Caco-2 (cell line): ENCODE measurements at regions of chr3 and their contacts with region 1.

Region 1: GRCh38 chr3:146283781-146284445 is 33.0 kb upstream of the PLSCR4 start:
- DNase-seq: peak; percentile 78 to 80
- H3K4me3 ChIP-seq: no peak overlapping the region
- H3K4me3 Mint-ChIP-seq: peak overlapping the region; percentile 66
- H3K27ac Mint-ChIP-seq: peak overlapping the region; percentile 95
- H3K4me1 ChIP-seq: peaks cover 40% of the 10 kb centered on the region
- H3K4me1 Mint-ChIP-seq: peaks cover 23% of the 10 kb centered on the region
- H3K27me3 ChIP-seq: no peaks in the 10 kb centered on the region
- H3K27me3 Mint-ChIP-seq: no peaks in the 10 kb centered on the region
- CTCF ChIP-seq: no peak

Region 2: DNA sequence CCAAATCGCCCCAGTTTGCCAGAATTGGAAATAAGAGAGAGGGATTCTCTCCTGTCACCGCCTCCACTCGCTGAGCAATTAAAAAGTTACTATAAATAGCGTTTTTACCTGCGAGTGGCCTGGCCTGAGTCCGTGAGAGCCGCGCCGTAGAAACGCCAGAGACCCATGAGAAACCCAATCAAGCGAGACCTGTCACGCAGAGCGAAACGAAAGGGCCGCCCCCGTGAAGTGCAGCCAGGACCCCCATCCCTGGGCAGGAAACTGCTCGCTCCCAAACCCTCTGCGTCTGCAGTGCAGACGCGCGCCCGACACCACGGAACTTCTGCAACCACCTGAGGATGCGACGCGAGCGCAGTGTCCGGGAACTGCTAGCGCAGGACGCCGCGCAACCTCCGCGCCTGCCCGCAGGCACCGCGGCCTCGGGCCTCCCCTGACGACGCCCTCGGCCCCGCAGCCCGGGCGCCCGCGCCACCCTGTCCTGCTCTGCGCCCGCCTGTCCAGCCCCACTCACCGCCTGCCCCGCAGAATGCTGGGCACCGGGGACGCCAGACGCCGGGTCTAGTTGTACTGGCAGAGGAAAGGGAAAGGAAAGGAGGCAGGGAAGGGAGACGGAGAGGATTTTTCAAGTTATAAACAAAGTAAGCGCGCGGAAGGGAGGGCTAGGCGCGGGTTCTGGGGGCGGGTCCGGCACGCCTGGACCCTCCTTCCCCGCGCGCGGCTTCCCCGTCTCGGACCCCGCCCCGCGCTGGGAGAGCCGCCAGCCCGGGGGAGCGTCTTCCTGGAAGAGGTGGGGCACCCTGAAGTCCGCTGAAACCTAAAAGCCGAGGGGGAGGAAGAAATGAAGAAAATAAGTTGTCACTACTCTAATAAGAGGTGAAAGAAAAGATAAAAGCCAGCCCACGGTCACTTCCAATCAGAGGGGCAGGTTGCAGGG is 33.2 kb before region 1 on chr3 and contains the start of gene PLSCR4:
- CTCF ChIA-PET with region 1: no interaction called
- POLR2A ChIA-PET with region 1: no interaction called
- intact Hi-C with region 1: loop called (anchors 1 kb)
- DNase-seq: peak; percentile 39 to 54
- H3K4me3 ChIP-seq: peak within 1 kb of the TSS; percentile 81
- H3K4me3 Mint-ChIP-seq: peak within 1 kb of the TSS; percentile 94
- H3K27ac Mint-ChIP-seq: peak within 1 kb of the TSS; percentile 76
- H3K4me1 ChIP-seq: no peaks in the 10 kb centered on the region
- H3K4me1 Mint-ChIP-seq: no peaks in the 10 kb centered on the region
- H3K27me3 ChIP-seq: no peaks in the 10 kb centered on the region
- H3K27me3 Mint-ChIP-seq: no peaks in the 10 kb centered on the region
- CTCF ChIP-seq: no peak
- total RNA-seq, gene PLSCR4: 7.9 and 9.1 TPM in 2 replicates

Region 3: GRCh38 chr3:146334151-146334550 is 50.2 kb after region 1 on chr3:
- CTCF ChIA-PET with region 1: no interaction called
- POLR2A ChIA-PET with region 1: no interaction called
- intact Hi-C with region 1: no loop called
- DNase-seq: peak in 1 of 2 experiments; percentile 30
- H3K4me3 ChIP-seq: no peak overlapping the region
- H3K4me3 Mint-ChIP-seq: no peak overlapping the region
- H3K27ac Mint-ChIP-seq: no peak overlapping the region
- H3K4me1 ChIP-seq: no peaks in the 10 kb centered on the region
- H3K4me1 Mint-ChIP-seq: no peaks in the 10 kb centered on the region
- H3K27me3 ChIP-seq: no peaks in the 10 kb centered on the region
- H3K27me3 Mint-ChIP-seq: no peaks in the 10 kb centered on the region
- CTCF ChIP-seq: peak; percentile 9 to 21

Region 4: GRCh38 chr3:146682171-146682570 is 398.3 kb after region 1 on chr3:
- CTCF ChIA-PET with region 1: no interaction called
- POLR2A ChIA-PET with region 1: no interaction called
- intact Hi-C with region 1: no loop called
- DNase-seq: no peak
- H3K4me3 ChIP-seq: no peak overlapping the region
- H3K4me3 Mint-ChIP-seq: no peak overlapping the region
- H3K27ac Mint-ChIP-seq: no peak overlapping the region
- H3K4me1 ChIP-seq: no peaks in the 10 kb centered on the region
- H3K4me1 Mint-ChIP-seq: no peaks in the 10 kb centered on the region
- H3K27me3 ChIP-seq: no peaks in the 10 kb centered on the region
- H3K27me3 Mint-ChIP-seq: no peaks in the 10 kb centered on the region
- CTCF ChIP-seq: no peak

Region 5: GRCh38 chr3:146692254-146692653 is 408.3 kb after region 1 on chr3:
- CTCF ChIA-PET with region 1: no interaction called
- POLR2A ChIA-PET with region 1: no interaction called
- intact Hi-C with region 1: no loop called
- DNase-seq: no peak
- H3K4me3 ChIP-seq: no peak overlapping the region
- H3K4me3 Mint-ChIP-seq: no peak overlapping the region
- H3K27ac Mint-ChIP-seq: no peak overlapping the region
- H3K4me1 ChIP-seq: no peaks in the 10 kb centered on the region
- H3K4me1 Mint-ChIP-seq: no peaks in the 10 kb centered on the region
- H3K27me3 ChIP-seq: no peaks in the 10 kb centered on the region
- H3K27me3 Mint-ChIP-seq: no peaks in the 10 kb centered on the region
- CTCF ChIP-seq: no peak